Activated CD4-positive, alpha-beta T cell treated with anti-CD3 and anti-CD28 coated beads, Interleukin-2, amount 10 ng/mL, durations not matched to agents 24 days and 14 days (primary cell): ENCODE measurements at regions of chr6 and their contacts with region 1.

Region 1: DNA sequence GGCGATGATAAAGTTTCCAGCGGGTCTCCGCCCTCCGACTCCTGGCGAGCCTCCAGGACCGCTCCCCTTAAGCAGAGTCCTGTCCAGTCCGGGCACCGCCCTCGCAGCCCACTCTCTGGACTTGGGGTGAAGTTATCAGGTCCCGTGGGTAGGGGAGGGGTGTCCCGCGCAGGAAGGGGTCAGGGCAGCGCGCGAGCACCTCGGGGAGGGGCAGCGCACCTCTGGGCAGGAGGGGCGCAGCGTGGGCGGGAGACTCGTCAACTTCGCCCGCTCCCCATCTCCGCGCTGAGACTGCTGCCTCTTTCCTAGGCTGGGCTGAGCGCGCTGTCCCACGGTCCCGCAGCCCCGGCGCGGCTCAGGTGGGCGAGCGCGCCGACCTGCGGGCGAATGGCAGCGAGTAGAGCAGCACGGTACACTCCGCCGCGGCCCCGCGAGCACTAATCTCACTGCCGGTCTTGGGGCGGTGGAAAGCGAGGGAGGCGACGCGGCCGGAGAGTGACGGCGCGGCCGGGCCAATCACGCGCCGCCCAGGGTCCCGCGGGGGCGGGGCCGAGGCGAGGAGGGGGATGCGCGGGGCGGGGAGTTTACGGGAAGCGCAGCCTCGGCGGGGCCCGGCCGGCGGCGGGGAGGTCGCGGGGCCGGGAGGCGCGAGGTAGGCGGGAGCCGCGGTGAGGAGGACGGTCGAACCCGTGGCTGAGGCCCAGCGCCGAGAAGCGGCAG is at the start of gene MAN1A1:
- DNase-seq: peak; percentile 98
- H3K4me3 Mint-ChIP-seq: peak within 1 kb of the TSS; percentile 97
- H3K27ac Mint-ChIP-seq: peak within 1 kb of the TSS; percentile 94
- H3K4me1 Mint-ChIP-seq: peaks cover 49% of the 10 kb centered on the region
- H3K27me3 Mint-ChIP-seq: no peaks in the 10 kb centered on the region
- total RNA-seq, gene MAN1A1: 43.0 and 43.7 TPM in 2 replicates

Region 2: DNA sequence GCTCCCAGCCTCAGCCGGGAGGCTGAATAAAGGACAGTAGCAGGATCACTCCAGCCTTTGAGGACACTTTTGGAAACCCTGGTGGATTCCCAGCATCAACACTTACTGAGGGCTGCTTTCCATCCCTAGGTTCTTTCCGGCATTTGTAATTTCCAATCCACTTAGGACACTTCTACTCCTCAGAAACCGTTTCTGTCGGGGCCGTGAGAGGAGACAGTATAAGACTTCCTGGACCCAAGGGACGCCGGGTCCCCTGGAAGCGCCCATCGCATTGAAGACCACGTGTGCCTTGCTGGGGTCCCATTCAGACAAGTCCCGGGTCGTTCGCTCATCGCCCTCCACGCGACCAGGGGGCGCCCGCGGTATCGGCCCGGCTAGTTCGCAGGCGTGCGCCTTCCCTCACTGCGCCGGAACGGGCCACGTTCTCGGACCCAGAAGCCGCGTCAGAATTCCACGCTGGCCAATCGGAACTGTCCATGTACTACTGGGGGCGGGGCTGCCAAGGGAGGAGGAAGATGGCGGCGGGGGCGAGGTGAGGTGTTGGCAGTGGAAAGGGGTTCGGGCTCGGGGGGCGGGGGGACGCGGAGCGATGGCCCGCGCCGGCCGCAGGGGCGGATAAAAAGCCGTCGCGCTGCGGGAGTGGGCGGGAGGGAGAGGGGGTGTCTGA is 1674.4 kb before region 1 on chr6 and contains the start of gene NUS1:
- intact Hi-C with region 1: loop called (anchors 10 kb)
- DNase-seq: peak; percentile 99
- H3K4me3 Mint-ChIP-seq: peak within 1 kb of the TSS; percentile 89
- H3K27ac Mint-ChIP-seq: peak within 1 kb of the TSS; percentile 93
- H3K4me1 Mint-ChIP-seq: peaks cover 45% of the 10 kb centered on the region
- H3K27me3 Mint-ChIP-seq: no peaks in the 10 kb centered on the region
- total RNA-seq, gene NUS1: 49.6 and 49.7 TPM in 2 replicates

Region 3: GRCh38 chr6:118934461-118935330 is 414.8 kb before region 1 on chr6 and contains the start of gene MCM9:
- intact Hi-C with region 1: loop called (anchors 1 kb)
- DNase-seq: peak; percentile 97
- H3K4me3 Mint-ChIP-seq: peak within 1 kb of the TSS; percentile 91
- H3K27ac Mint-ChIP-seq: peak within 1 kb of the TSS; percentile 97
- H3K4me1 Mint-ChIP-seq: peaks cover 19% of the 10 kb centered on the region
- H3K27me3 Mint-ChIP-seq: no peaks in the 10 kb centered on the region
- total RNA-seq, gene MCM9: 19.0 and 21.3 TPM in 2 replicates

Region 4: GRCh38 chr6:119147101-119148053 is 202.1 kb before region 1 on chr6:
- intact Hi-C with region 1: loop called (anchors 1 kb)
- DNase-seq: peak; percentile 78
- H3K4me3 Mint-ChIP-seq: peak overlapping the region; percentile 36
- H3K27ac Mint-ChIP-seq: peak overlapping the region; percentile 86
- H3K4me1 Mint-ChIP-seq: peaks cover 56% of the 10 kb centered on the region
- H3K27me3 Mint-ChIP-seq: no peaks in the 10 kb centered on the region

Region 5: GRCh38 chr6:119333707-119334295 is 15.7 kb before region 1 on chr6:
- intact Hi-C with region 1: loop called (anchors 1 kb)
- DNase-seq: peak; percentile 64
- H3K4me3 Mint-ChIP-seq: no peak overlapping the region
- H3K27ac Mint-ChIP-seq: no peak overlapping the region
- H3K4me1 Mint-ChIP-seq: peaks cover 48% of the 10 kb centered on the region
- H3K27me3 Mint-ChIP-seq: no peaks in the 10 kb centered on the region

Region 6: GRCh38 chr6:119533603-119534279 is 184.3 kb after region 1 on chr6:
- intact Hi-C with region 1: loop called (anchors 1 kb)
- DNase-seq: no peak
- H3K4me3 Mint-ChIP-seq: no peak overlapping the region
- H3K27ac Mint-ChIP-seq: no peak overlapping the region
- H3K4me1 Mint-ChIP-seq: peaks cover 8% of the 10 kb centered on the region
- H3K27me3 Mint-ChIP-seq: peaks cover 22% of the 10 kb centered on the region